Esophagus muscularis mucosa (tissue), 4 donors: ENCODE measurements at regions of chr10 and their contacts with region 1.

Region 1: GRCh38 chr10:102352066-102352715 is 43.3 kb upstream of the NFKB2 start:
- DNase-seq: no peak
- H3K4me3 ChIP-seq: no peak overlapping the region
- H3K27ac ChIP-seq: no peak overlapping the region
- H3K4me1 ChIP-seq: peaks cover 0 to 7% (median 0%) of the 10 kb centered on the region in 4 donors
- H3K27me3 ChIP-seq: no peaks in the 10 kb centered on the region
- CTCF ChIP-seq: peak; percentile 86 to 93 (median 89)
- EP300 ChIP-seq: no peak
- POLR2A ChIP-seq: no peak

Region 2: GRCh38 chr10:102167861-102168260 is 184.3 kb before region 1 on chr10:
- intact Hi-C with region 1: loop called (anchors 5 kb)
- DNase-seq: no peak
- H3K4me3 ChIP-seq: no peak overlapping the region
- H3K27ac ChIP-seq: no peak overlapping the region
- H3K4me1 ChIP-seq: peaks cover 3 to 13% (median 12%) of the 10 kb centered on the region in 4 donors
- H3K27me3 ChIP-seq: no peaks in the 10 kb centered on the region
- CTCF ChIP-seq: no peak
- EP300 ChIP-seq: no peak
- POLR2A ChIP-seq: no peak

Region 3: DNA sequence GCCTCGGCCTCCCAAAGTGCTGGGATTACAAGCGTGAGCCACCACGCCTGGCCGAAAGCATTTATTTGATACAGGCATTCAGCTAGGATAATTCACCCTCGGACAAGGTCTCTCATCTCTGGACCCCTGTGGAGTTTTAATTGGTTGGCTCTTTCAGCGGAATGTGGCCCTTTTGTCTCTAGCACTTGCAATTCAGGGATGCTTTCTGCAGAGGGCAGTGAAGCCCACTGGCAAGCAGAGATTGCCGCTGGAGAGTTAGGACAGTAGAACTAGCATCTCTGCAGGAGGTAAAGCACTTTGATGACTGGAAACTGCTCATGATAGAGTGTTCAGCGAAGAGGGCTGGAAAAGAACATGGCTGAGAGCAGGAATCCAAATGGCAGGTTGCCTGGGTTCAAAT is 213.6 kb after region 1 on chr10:
- intact Hi-C with region 1: no loop called
- DNase-seq: no peak
- H3K4me3 ChIP-seq: no peak overlapping the region
- H3K27ac ChIP-seq: no peak overlapping the region
- H3K4me1 ChIP-seq: peaks cover 0 to 6% (median 0%) of the 10 kb centered on the region in 4 donors
- H3K27me3 ChIP-seq: no peaks in the 10 kb centered on the region
- CTCF ChIP-seq: no peak
- EP300 ChIP-seq: no peak
- POLR2A ChIP-seq: no peak